ENCODE measurements at regions of chr2 and their contacts with region 1.

Region 1: DNA sequence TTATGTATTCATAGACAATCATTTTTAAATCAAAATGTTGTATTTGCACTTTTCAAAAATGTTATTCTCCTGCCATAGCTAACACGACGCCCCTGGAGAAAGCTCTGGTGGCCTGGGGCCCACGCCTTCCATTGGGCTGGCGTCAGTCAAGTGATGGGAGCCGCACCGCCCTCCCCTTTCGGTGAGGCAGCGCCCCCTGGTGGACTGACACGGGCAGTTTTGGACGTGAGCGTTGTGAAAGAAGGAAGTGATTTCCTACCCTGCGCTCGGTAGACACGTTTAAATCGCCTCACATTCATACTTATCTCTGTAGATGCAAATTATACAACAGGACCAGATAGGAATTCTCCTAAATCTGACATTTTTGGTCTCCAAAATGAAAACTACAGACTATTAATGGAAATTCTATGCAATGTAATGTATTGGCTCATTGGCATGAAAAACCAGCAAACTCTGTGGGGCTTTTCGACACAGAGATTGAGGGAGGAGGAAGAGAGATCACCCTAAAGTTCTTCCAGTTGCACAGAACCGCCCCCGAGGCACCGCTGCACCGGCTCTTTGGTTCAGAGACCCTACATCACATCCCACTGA is 326.2 kb upstream of the SOX11 start:
- DNase-seq: peak; percentile 83
- ATAC-seq: peak; percentile 65
- H3K4me3 Mint-ChIP-seq: no peak overlapping the region
- H3K27ac Mint-ChIP-seq: no peak overlapping the region
- H3K4me1 Mint-ChIP-seq: no peaks in the 10 kb centered on the region
- H3K27me3 Mint-ChIP-seq: no peaks in the 10 kb centered on the region

Region 2: DNA sequence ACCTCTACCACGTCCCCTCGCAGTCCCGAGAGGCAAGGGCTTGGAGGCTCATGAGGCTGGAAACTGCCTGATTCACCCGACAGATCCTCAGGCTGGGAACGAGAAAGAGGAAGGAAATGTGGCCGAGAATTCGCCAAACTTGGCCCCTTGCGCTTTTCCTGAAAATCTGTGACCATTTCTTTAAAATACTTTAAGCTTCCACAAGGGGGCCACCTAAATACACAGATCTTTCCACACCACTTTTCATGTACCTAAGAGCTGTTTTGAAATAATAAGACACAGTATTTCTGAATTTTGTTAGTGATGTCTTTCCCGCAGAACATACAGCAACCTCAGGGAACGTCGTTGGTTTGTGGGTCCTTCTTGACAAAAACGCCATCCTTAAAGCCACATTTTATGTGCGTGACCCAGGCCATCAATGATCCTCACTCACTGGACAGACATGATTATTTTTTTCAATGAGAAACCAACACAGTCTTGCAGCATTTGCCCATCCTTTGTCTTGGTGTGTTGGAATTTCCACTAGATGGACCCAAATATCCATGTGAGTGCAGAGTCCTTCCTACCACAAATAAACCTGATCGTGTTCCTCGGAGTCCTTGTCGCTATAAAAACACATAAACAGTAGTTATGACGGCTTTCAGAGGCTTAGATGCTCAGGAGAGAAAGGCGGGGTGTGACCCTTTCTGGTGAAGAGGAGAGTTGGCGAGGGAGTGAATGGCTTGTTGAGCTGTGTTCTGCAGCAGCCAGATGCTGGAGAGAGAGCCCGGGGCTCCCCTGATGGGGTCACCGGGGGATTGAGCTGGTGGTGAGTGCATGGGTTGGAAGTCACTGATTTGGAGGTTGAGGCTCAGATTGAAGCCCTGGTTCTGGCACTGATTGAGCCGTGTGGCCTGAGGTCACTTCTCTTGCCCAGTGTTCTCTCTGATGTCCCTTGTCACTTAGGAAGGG is 1637.6 kb before region 1 on chr2:
- CTCF ChIA-PET with region 1: interaction called, 4 read pairs
- POLR2A ChIA-PET with region 1: no interaction called
- intact Hi-C with region 1: loop called in 1 of 2 experiments (anchors 10 kb)
- DNase-seq: no peak
- ATAC-seq: no peak
- H3K4me3 Mint-ChIP-seq: no peak overlapping the region
- H3K27ac Mint-ChIP-seq: no peak overlapping the region
- H3K4me1 Mint-ChIP-seq: no peaks in the 10 kb centered on the region
- H3K27me3 Mint-ChIP-seq: peaks cover 2% of the 10 kb centered on the region

Region 3: DNA sequence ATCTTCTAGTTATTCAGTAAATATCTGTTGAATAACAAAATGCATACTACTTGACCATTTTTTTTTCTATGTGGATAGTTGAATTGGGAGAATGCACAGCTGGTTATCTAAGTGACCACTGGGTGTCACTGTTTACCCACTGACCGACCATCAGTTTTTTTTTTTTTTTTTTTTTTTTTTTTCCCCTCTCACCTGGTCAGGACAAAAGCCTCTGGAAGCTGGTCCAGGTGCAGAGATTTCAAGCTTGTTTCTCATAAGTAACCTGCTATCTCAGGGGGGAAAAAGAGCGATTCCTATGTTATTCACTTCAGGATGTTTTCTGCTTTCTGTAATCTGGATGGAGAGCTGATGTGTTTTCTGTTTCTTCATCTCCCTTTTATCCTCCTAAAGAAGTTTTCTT is 1406.6 kb before region 1 on chr2:
- CTCF ChIA-PET with region 1: interaction called, 3 read pairs
- POLR2A ChIA-PET with region 1: no interaction called
- intact Hi-C with region 1: loop called in 1 of 2 experiments (anchors 5 kb)
- DNase-seq: no peak
- ATAC-seq: no peak
- H3K4me3 Mint-ChIP-seq: no peak overlapping the region
- H3K27ac Mint-ChIP-seq: no peak overlapping the region
- H3K4me1 Mint-ChIP-seq: no peaks in the 10 kb centered on the region
- H3K27me3 Mint-ChIP-seq: no peaks in the 10 kb centered on the region

Region 4: DNA sequence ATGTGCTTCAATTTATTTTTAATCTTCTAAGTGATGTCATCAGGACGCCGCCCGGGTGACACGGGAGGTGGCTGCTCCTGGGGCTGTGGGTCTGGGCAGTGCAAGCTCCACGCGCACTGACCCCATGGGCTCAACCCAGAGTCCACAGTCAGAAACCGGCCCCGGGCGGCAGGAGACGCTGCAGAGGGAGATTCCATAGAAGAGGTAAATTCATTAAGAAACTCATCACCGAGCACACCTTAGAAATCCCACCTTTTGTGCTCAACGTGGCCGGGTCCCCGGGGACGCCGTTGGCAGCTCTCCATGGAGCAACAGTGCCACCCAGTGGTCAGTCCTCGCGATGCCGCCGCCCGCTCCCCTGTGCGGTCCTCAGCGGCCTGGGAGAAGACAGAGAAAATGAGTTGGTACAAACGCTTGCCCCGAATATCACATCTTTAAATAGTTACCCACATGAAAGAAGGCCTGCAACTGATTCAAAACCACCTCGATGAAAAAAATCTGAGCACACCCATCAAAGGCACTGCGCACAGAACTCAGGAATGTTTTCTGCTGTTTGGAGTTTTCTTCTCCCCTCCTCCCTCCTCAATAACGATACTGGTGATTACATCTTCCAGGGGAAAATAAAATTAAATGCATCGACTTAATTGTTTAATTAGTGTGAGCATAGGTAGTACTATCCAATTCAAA is 1407.2 kb after region 1 on chr2:
- CTCF ChIA-PET with region 1: no interaction called
- POLR2A ChIA-PET with region 1: no interaction called
- intact Hi-C with region 1: loop called in 1 of 2 experiments (anchors 5 kb)
- DNase-seq: peak; percentile 86
- ATAC-seq: peak; percentile 94
- H3K4me3 Mint-ChIP-seq: no peak overlapping the region
- H3K27ac Mint-ChIP-seq: no peak overlapping the region
- H3K4me1 Mint-ChIP-seq: peaks cover 10% of the 10 kb centered on the region
- H3K27me3 Mint-ChIP-seq: peaks cover 28% of the 10 kb centered on the region